ENCODE measurements at regions of chr1 and their contacts with region 1.

Region 1: GRCh38 chr1:156500797-156501499 is 373 bp upstream of the MEF2D start:
- DNase-seq: peak; percentile 98
- H3K4me3 Mint-ChIP-seq: peak overlapping the region; percentile 88
- H3K27ac Mint-ChIP-seq: peak overlapping the region; percentile 97
- H3K4me1 Mint-ChIP-seq: peaks cover 65% of the 10 kb centered on the region
- H3K27me3 Mint-ChIP-seq: no peaks in the 10 kb centered on the region
- CTCF ChIP-seq: peak; percentile 79

Region 2: DNA sequence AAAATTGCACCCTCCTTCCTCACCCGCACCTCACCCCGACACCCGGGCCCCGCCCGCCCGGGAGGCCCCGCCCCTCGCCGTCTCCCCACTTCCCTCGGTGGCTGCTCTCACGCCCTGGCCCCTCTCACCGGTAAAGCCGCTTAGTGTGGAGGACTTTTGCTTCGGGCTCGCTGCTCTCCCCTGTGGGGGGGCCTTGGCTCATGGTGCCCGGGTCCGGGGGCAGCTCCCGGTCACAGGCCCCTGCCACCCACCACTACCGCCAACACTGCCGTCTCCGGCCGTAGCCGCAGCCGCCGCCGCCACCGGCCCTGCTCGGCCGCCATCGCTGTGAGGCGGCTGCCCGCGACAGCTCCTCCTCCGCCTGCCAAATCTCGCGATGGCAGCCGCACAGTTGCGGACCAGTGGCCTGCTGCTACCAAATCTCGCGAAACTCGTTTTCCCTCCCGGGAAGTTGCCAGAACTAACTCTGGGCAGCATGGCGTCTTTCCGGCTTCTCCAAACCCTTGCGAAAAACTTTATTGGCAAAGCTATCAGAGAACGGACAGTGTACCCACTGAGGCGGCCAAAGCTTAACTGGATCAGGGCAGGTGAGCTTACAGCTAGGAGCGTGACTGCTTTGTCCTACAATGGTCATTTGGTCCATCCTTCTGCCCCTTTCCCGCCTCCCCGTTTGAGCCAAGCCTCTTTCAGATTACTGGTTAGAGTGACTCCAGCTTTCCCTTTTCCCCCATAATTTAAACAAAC is 218.3 kb before region 1 on chr1 and contains the start of gene SMG5:
- CTCF ChIA-PET with region 1: no interaction called
- intact Hi-C with region 1: loop called (anchors 5 kb)
- DNase-seq: peak; percentile 98
- H3K4me3 Mint-ChIP-seq: peak within 1 kb of the TSS; percentile 72
- H3K27ac Mint-ChIP-seq: peak within 1 kb of the TSS; percentile 78
- H3K4me1 Mint-ChIP-seq: peaks cover 19% of the 10 kb centered on the region
- H3K27me3 Mint-ChIP-seq: no peaks in the 10 kb centered on the region
- CTCF ChIP-seq: no peak
- total RNA-seq, gene SMG5: 117 and 118 TPM in 2 replicates

Region 3: DNA sequence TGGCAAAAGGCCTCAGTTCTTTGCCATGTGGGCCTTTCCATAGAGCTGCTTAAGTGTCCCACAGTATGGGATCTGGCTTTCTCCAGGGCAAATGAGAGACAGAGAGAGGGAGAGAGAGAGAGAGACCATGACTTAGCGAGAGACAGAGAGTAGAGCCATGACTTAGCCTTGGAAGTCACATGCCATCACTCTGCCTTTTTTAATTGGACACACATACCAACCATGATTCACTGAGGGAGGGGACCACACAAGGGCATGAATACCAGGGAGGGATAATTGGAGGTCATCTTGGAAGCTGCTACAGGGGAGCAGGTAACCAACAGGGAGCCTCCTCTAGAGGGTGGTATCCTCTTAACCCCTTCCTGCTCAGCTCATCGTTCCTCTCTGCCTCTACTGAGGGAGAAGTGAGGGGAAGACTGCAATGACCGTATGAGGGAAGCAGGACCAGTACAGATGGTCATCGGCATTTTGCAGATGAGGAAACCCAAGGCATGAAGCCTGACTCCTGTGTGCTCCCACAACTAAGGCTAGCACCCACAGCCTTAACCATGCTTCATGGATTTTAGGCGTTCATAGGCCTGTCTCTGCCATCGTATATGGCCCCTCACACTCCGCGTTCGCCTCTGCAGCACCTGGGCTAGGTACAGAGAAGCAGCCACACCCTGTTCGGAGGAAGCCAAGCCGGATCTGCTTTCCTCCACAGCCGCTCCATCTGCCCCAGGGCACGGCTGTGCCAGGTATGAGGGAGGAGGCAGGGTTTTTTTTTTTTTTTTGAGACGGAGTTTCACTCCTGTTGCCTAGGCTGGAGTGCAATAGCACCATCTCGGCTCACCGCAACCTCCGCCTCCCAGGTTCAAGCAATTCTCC is 38.9 kb before region 1 on chr1:
- CTCF ChIA-PET with region 1: interaction called, 36 read pairs
- intact Hi-C with region 1: loop called (anchors 1 kb)
- DNase-seq: no peak
- H3K4me3 Mint-ChIP-seq: no peak overlapping the region
- H3K27ac Mint-ChIP-seq: no peak overlapping the region
- H3K4me1 Mint-ChIP-seq: peaks cover 38% of the 10 kb centered on the region
- H3K27me3 Mint-ChIP-seq: no peaks in the 10 kb centered on the region
- CTCF ChIP-seq: no peak

Region 4: GRCh38 chr1:156471496-156472490 is 29.2 kb before region 1 on chr1:
- CTCF ChIA-PET with region 1: interaction called, 9 read pairs
- intact Hi-C with region 1: loop called (anchors 2 kb)
- DNase-seq: peak; percentile 93
- H3K4me3 Mint-ChIP-seq: peak overlapping the region; percentile 27
- H3K27ac Mint-ChIP-seq: peak overlapping the region; percentile 66
- H3K4me1 Mint-ChIP-seq: peaks cover 34% of the 10 kb centered on the region
- H3K27me3 Mint-ChIP-seq: no peaks in the 10 kb centered on the region
- CTCF ChIP-seq: no peak

Region 5: GRCh38 chr1:156571949-156572662 is 71.2 kb after region 1 on chr1 and contains the start of gene IQGAP3:
- CTCF ChIA-PET with region 1: interaction called, 5 read pairs
- intact Hi-C with region 1: loop called (anchors 5 kb)
- DNase-seq: peak; percentile 95
- H3K4me3 Mint-ChIP-seq: peak within 1 kb of the TSS; percentile 92
- H3K27ac Mint-ChIP-seq: peak within 1 kb of the TSS; percentile 80
- H3K4me1 Mint-ChIP-seq: peaks cover 38% of the 10 kb centered on the region
- H3K27me3 Mint-ChIP-seq: peaks cover 22% of the 10 kb centered on the region
- CTCF ChIP-seq: no peak
- total RNA-seq, gene IQGAP3: 66.2 and 93.6 TPM in 2 replicates

Measured in Calu3 (cell line).